ENCODE measurements at regions of chr5 and their contacts with region 1.

Region 1: DNA sequence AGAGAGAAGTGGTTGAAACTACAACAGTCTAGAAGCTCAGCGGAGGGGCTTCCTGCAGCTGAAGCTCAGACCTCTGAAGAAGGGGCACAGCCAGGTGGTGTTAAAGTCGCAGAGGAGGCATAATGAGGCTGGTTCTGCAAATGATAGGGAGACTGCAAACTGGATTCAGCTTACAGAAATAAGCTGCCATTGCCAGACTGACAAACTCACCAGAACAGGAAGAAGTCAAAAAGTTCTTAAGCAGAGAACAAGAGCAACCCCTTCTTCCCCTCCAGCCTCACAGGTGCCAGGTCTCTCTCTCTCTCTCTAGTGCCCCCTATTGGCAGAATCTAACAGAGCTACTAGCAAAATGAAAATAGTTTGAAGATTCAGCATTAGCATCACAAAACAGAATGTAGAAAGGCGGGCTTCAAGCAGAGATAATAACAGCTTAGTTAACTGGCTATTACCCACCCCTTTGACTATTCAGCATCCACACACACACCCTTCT is 76.7 kb downstream of the GRAMD2B start:
- DNase-seq: no peak
- H3K4me3 ChIP-seq: no peak overlapping the region
- CTCF ChIP-seq: peak; percentile 32

Region 2: DNA sequence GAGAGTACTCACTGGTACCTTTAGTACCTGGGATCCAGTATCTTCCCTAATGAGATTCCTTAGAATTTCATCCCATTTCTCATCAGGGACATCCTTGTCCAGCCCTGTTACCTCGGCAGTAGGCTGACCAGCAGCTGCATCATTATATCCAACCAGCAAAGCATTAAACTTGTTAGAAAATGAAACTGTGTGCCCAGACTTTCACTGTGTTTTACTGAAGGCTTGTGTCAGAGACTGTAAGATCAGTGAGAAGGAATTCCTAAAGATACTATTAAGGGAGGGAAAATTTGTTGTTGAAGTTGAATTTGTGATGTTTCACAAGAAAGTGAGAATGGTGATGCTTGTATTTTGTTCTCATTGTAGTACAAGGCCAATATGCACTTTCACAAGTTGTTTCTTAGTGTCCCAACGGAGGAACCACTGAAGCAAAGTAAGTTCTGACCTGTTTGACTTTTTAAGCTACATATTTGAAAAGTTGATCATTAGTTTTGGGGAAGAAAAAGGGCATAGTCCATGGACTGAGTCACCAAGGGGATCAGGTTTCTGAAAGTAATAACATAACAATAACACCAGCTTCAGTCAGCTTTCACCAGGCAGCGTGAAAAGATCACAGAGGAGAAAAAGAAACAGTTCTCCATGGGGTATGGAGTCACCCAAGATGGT is 27.9 kb before region 1 on chr5:
- CTCF ChIA-PET with region 1: interaction called, 11 read pairs
- POLR2A ChIA-PET with region 1: no interaction called
- DNase-seq: peak; percentile 45
- H3K4me3 ChIP-seq: no peak overlapping the region
- CTCF ChIP-seq: no peak

Region 3: GRCh38 chr5:126483156-126483555 is 16.7 kb before region 1 on chr5:
- CTCF ChIA-PET with region 1: interaction called, 55 read pairs
- POLR2A ChIA-PET with region 1: no interaction called
- DNase-seq: no peak
- H3K4me3 ChIP-seq: no peak overlapping the region
- CTCF ChIP-seq: no peak

Region 4: GRCh38 chr5:126513703-126514102 is 13.8 kb after region 1 on chr5:
- CTCF ChIA-PET with region 1: interaction called, 34 read pairs
- POLR2A ChIA-PET with region 1: no interaction called
- DNase-seq: no peak
- H3K4me3 ChIP-seq: no peak overlapping the region
- CTCF ChIP-seq: no peak

Region 5: GRCh38 chr5:126519634-126520592 is 20.0 kb after region 1 on chr5:
- CTCF ChIA-PET with region 1: interaction called, 34 read pairs
- POLR2A ChIA-PET with region 1: no interaction called
- DNase-seq: no peak
- H3K4me3 ChIP-seq: peak overlapping the region; percentile 27; the same call in 1 of the 2 replicates
- CTCF ChIP-seq: no peak

Region 6: DNA sequence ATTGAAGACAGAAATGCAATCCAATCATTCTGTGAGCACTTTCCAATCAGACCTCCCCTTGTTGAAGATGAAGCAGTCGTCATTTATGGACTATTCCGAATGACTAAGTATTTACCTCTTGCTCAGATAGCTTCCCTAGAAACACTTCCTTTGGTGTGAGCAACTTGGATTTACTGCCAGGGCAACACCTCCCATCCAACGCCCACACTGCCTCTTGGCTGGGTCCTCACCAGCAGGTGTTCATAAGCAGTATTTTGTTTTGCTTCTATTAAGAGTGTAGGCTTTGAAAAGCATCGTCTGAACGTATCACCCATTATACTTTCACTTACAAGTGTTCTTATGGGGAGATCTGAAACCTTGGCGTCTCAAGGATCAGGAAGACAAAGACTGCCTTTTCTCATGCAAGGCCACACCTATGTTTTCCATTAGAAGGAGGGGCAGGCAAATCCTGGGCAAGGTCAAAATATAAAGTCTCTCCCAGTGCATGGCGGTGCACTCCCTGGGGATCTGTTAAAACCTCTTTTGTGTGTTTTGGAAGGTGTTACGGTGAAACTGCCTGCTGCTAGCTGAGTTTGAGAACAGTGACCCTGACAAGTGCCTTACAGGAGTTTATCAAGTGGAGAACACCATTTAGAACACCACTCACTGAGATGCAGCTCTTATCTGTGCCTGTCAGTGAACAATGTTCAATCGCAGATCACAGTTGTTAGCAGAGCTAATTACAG is 541.1 kb after region 1 on chr5:
- CTCF ChIA-PET with region 1: no interaction called
- POLR2A ChIA-PET with region 1: no interaction called
- DNase-seq: no peak
- H3K4me3 ChIP-seq: no peak overlapping the region
- CTCF ChIP-seq: no peak

Measured in AG04449 (cell line).